Heart left ventricle (tissue), 16 donors: ENCODE measurements at regions of chr5 and their contacts with region 1.

Region 1: GRCh38 chr5:57779383-57780223 is 297.0 kb upstream of the ACTBL2 start:
- DNase-seq: peak in 2 of 5 donors; percentile 41 to 43
- ATAC-seq: peak; percentile 78 to 88 (median 84)
- H3K4me3 ChIP-seq: peak overlapping the region in 3 of 12 donors; percentile 1 to 8 (median 7)
- H3K27ac ChIP-seq: peak overlapping the region in 11 of 12 donors; percentile 2 to 73 (median 50)
- H3K4me1 ChIP-seq: peaks cover 5 to 40% (median 17%) of the 10 kb centered on the region in 12 donors
- H3K27me3 ChIP-seq: no peaks in the 10 kb centered on the region
- CTCF ChIP-seq: peak; percentile 46 to 82 (median 71)
- POLR2A ChIP-seq: no peak

Region 2: DNA sequence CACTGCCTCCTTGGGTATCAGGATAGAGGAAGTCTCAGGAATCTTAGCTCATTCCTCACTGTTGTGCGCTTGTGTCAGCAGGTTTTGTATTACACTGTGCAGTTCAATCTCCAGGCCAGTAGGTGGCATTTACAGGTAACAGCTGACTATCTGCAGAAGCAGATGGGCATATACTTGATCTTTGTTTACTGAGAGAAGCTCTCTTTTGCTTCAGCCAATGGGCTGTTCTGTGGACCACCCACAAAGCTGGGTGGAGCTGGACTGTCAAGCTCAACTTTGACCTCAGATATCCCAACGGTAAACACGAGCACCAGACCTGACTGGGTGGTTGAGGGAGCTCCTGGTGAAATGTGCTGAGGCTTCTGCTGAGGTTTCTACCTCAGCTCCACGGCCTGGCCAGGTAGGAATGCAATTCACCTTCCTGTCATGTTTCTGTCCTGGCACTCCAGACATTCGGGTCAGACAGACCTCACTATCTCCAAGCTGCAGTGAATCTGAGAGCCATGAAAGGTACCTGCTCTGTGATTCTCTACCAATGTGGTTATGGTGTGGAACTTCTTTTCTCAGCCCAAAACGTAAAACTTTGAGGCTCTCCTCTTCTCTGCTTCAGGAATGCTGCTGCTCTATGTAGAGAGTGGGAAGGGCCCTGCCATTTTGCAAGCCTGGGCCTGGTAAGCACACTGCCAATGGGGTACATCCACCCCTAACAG is 129.1 kb before region 1 on chr5:
- intact Hi-C with region 1: loop called in 2 of 10 experiments (anchors 5 to 10 kb)
- DNase-seq: no peak
- ATAC-seq: peak in 2 of 4 donors; percentile 50 to 61
- H3K4me3 ChIP-seq: no peak overlapping the region
- H3K27ac ChIP-seq: no peak overlapping the region
- H3K4me1 ChIP-seq: peaks cover 0 to 16% (median 0%) of the 10 kb centered on the region in 12 donors
- H3K27me3 ChIP-seq: no peaks in the 10 kb centered on the region
- CTCF ChIP-seq: peak; percentile 33 to 61 (median 51)
- POLR2A ChIP-seq: no peak

Region 3: GRCh38 chr5:57834829-57835608 is 55.4 kb after region 1 on chr5:
- intact Hi-C with region 1: loop called in 3 of 10 experiments (anchors 5 kb)
- DNase-seq: no peak
- ATAC-seq: peak in 1 of 4 donors; percentile 50
- H3K4me3 ChIP-seq: no peak overlapping the region
- H3K27ac ChIP-seq: peak overlapping the region in 5 of 12 donors; percentile 20 to 52 (median 36)
- H3K4me1 ChIP-seq: peaks cover 0 to 9% (median 3%) of the 10 kb centered on the region in 12 donors
- H3K27me3 ChIP-seq: no peaks in the 10 kb centered on the region
- CTCF ChIP-seq: no peak
- POLR2A ChIP-seq: no peak

Region 4: GRCh38 chr5:57880216-57880615 is 100.6 kb after region 1 on chr5:
- intact Hi-C with region 1: loop called in 6 of 10 experiments (anchors 5 kb)
- DNase-seq: no peak
- ATAC-seq: no peak
- H3K4me3 ChIP-seq: no peak overlapping the region
- H3K27ac ChIP-seq: no peak overlapping the region
- H3K4me1 ChIP-seq: peaks cover 0 to 4% (median 0%) of the 10 kb centered on the region in 12 donors
- H3K27me3 ChIP-seq: no peaks in the 10 kb centered on the region
- CTCF ChIP-seq: no peak
- POLR2A ChIP-seq: no peak

Region 5: GRCh38 chr5:57956636-57957035 is 177.0 kb after region 1 on chr5:
- intact Hi-C with region 1: no loop called
- DNase-seq: no peak
- ATAC-seq: no peak
- H3K4me3 ChIP-seq: no peak overlapping the region
- H3K27ac ChIP-seq: no peak overlapping the region
- H3K4me1 ChIP-seq: no peaks in the 10 kb centered on the region
- H3K27me3 ChIP-seq: no peaks in the 10 kb centered on the region
- CTCF ChIP-seq: no peak
- POLR2A ChIP-seq: no peak

Region 6: DNA sequence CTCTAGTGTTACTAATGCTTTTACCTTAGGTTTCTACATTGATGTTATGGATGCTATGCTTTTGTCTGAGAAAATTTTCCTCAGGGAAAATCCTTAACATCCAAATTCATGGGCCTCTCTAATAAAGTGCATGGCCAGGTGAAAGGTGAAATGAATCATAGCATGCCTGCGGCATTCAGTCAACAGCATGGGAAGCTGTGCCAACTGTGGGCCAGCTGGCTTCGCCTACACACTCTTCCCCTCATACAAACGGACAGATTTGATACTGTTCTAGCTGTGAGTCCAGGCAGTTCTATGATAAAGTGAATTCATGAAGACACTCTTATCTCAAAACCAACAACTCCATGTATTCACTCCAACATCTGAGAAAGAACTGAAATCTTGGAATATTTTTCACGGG is 306.2 kb after region 1 on chr5:
- intact Hi-C with region 1: no loop called
- DNase-seq: no peak
- ATAC-seq: no peak
- H3K4me3 ChIP-seq: no peak overlapping the region
- H3K27ac ChIP-seq: no peak overlapping the region
- H3K4me1 ChIP-seq: peaks cover 0 to 9% (median 0%) of the 10 kb centered on the region in 12 donors
- H3K27me3 ChIP-seq: no peaks in the 10 kb centered on the region
- CTCF ChIP-seq: no peak
- POLR2A ChIP-seq: no peak